Activated T-helper 2 cell treated with anti-CD3 and anti-CD28 coated beads, Interferon-gamma antibody, Interleukin-2, Interleukin-4, amounts not matched to agents 10 μg/mL and 5 μg/mL and 100 μg/mL, durations not matched to agents 14 hours and 24 hours and 36 hours (primary cell): ENCODE measurements at regions of chr20 and their contacts with region 1.

Region 1: GRCh38 chr20:62740286-62741141 is 31.9 kb downstream of the NTSR1 start:
- DNase-seq: peak; percentile 90
- H3K4me3 Mint-ChIP-seq: peak overlapping the region; percentile 74
- H3K27ac Mint-ChIP-seq: peak overlapping the region; percentile 80
- H3K4me1 Mint-ChIP-seq: peaks cover 39% of the 10 kb centered on the region
- H3K27me3 Mint-ChIP-seq: peaks cover 15% of the 10 kb centered on the region

Region 2: DNA sequence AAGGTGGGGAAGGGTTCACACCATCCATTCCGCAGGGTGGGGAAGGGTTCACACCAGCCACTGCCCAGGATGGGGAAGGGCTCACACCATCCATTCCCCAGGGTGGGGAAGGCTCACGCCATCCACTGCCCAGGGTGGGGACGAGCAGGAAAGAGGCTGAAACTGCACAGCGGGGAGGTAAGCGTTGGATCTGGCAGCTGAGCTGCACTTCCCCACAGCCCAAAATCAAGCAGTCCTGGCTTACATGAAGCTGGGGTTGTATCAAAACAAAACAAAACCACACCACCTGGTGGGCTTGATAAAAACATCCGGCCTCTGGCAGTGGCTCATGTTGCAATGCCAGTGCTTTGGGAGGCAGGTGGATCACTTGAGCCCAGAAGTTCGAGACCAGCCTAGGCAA is 943.3 kb before region 1 on chr20:
- intact Hi-C with region 1: no loop called
- DNase-seq: no peak
- H3K4me3 Mint-ChIP-seq: no peak overlapping the region
- H3K27ac Mint-ChIP-seq: no peak overlapping the region
- H3K4me1 Mint-ChIP-seq: no peaks in the 10 kb centered on the region
- H3K27me3 Mint-ChIP-seq: no peaks in the 10 kb centered on the region

Region 3: GRCh38 chr20:62500237-62500864 is 240.2 kb before region 1 on chr20:
- intact Hi-C with region 1: loop called (anchors 1 kb)
- DNase-seq: peak; percentile 65
- H3K4me3 Mint-ChIP-seq: no peak overlapping the region
- H3K27ac Mint-ChIP-seq: peak overlapping the region; percentile 85
- H3K4me1 Mint-ChIP-seq: peaks cover 23% of the 10 kb centered on the region
- H3K27me3 Mint-ChIP-seq: no peaks in the 10 kb centered on the region

Region 4: GRCh38 chr20:62652051-62652926 is 88.2 kb before region 1 on chr20:
- intact Hi-C with region 1: loop called (anchors 2 kb)
- DNase-seq: peak; percentile 66
- H3K4me3 Mint-ChIP-seq: peak overlapping the region; percentile 72
- H3K27ac Mint-ChIP-seq: peak overlapping the region; percentile 90
- H3K4me1 Mint-ChIP-seq: peaks cover 40% of the 10 kb centered on the region
- H3K27me3 Mint-ChIP-seq: no peaks in the 10 kb centered on the region

Region 5: GRCh38 chr20:62707921-62708521 is 32.5 kb before region 1 on chr20:
- intact Hi-C with region 1: loop called (anchors 5 kb)
- DNase-seq: no peak
- H3K4me3 Mint-ChIP-seq: no peak overlapping the region
- H3K27ac Mint-ChIP-seq: no peak overlapping the region
- H3K4me1 Mint-ChIP-seq: peaks cover 5% of the 10 kb centered on the region
- H3K27me3 Mint-ChIP-seq: peaks cover 48% of the 10 kb centered on the region

Region 6: GRCh38 chr20:62716198-62716940 is 24.1 kb before region 1 on chr20:
- intact Hi-C with region 1: loop called (anchors 1 kb)
- DNase-seq: peak; percentile 38
- H3K4me3 Mint-ChIP-seq: peak overlapping the region; percentile 6
- H3K27ac Mint-ChIP-seq: peak overlapping the region; percentile 51
- H3K4me1 Mint-ChIP-seq: peaks cover 18% of the 10 kb centered on the region
- H3K27me3 Mint-ChIP-seq: peaks cover 48% of the 10 kb centered on the region

Region 7: GRCh38 chr20:62776692-62777527 is 36.4 kb after region 1 on chr20:
- intact Hi-C with region 1: loop called (anchors 1 kb)
- DNase-seq: peak; percentile 57
- H3K4me3 Mint-ChIP-seq: peak overlapping the region; percentile 51
- H3K27ac Mint-ChIP-seq: peak overlapping the region; percentile 84
- H3K4me1 Mint-ChIP-seq: peaks cover 31% of the 10 kb centered on the region
- H3K27me3 Mint-ChIP-seq: no peaks in the 10 kb centered on the region